IMR-90 (cell line): ENCODE measurements at regions of chr2 and their contacts with region 1.

Region 1: GRCh38 chr2:172095146-172095904 is 7.4 kb downstream of the DLX2 start:
- DNase-seq: peak; percentile 78
- ATAC-seq: peak; percentile 38
- H3K4me3 ChIP-seq: peak overlapping the region; percentile 58
- H3K27ac ChIP-seq: peak overlapping the region; percentile 14; the same call in 1 of the 2 replicates
- H3K4me1 ChIP-seq: peaks cover 12% of the 10 kb centered on the region
- H3K27me3 ChIP-seq: peaks cover 44% of the 10 kb centered on the region
- CTCF ChIP-seq: no peak
- POLR2A ChIP-seq: 0 out of 2 replicates have a peak, but pooled peaks have one; percentile 30
- RAD21 ChIP-seq: no peak

Region 2: GRCh38 chr2:171922230-171923022 is 172.9 kb before region 1 on chr2 and contains the start of gene HAT1:
- CTCF ChIA-PET with region 1: no interaction called
- POLR2A ChIA-PET with region 1: no interaction called
- dilution Hi-C with region 1: no loop called
- in situ Hi-C with region 1: no loop called
- intact Hi-C with region 1: loop called (anchors 2 kb)
- DNase-seq: peak; percentile 98
- ATAC-seq: peak; percentile 98
- H3K4me3 ChIP-seq: peak within 1 kb of the TSS; percentile 71
- H3K27ac ChIP-seq: peak within 1 kb of the TSS; percentile 65
- H3K4me1 ChIP-seq: no peaks in the 10 kb centered on the region
- H3K27me3 ChIP-seq: no peaks in the 10 kb centered on the region
- CTCF ChIP-seq: no peak
- POLR2A ChIP-seq: peak; percentile 74
- RAD21 ChIP-seq: no peak
- total RNA-seq, gene HAT1: 24.4 and 49.2 TPM in 2 replicates